ENCODE measurements at regions of chr12 and their contacts with region 1.

Region 1: GRCh38 chr12:113048716-113049127 is 7.8 kb upstream of the DTX1 start:
- DNase-seq: peak; percentile 73 to 89
- ATAC-seq: peak; percentile 70 to 90
- H3K4me3 ChIP-seq: no peak overlapping the region
- H3K27ac ChIP-seq: no peak overlapping the region
- H3K4me1 ChIP-seq: no peaks in the 10 kb centered on the region
- CTCF ChIP-seq: peak; percentile 90
- EP300 ChIP-seq: no peak
- POLR2A ChIP-seq: no peak
- RAD21 ChIP-seq: peak; percentile 87 to 96

Region 2: DNA sequence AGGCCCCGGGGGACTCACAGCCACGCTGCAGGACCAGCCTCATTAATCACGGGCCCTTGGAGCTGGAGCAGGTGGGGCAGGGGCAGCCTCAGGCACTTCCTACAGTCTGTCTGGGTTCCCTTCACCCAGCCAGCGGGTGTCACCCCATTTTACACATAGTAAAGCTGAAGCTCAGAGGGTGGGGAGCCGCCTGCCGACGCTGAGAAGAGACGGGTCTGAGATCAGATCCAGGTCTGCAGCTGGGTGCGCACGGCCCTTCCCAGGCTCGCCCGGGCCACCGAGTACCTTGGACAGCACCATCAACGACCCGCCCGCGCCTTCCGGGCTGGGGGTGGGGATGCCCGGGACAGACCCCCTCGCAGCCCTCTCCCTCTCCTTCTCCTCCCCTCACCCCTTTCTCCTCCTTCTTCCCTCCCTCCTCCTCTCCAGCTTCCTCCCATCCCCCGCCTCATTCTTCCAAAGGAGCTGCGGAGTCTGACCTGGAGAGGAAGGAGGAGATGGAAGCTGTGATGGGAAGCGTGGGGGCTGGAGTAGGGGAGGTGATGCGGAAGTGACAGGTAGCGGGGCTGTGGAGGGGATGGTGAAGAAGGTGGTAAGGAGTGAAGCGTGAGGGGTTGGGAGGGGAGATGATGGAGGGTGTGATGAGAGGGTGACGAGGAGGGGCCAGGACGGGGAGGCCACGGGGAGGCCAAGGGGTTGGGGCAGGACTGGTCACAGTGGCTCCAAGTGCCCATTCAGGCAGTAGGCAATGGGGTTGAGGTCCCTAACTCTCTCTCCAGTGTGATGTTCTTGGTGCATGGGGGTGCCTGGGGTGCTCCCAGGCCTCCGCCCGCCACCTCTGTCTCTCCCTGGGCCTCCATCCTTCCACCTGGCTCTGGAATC is 16.6 kb after region 1 on chr12:
- CTCF ChIA-PET with region 1: interaction called, 30 read pairs
- POLR2A ChIA-PET with region 1: no interaction called
- DNase-seq: no peak
- ATAC-seq: peak; percentile 38 to 64; a peak in 4 of 6 replicates
- H3K4me3 ChIP-seq: no peak overlapping the region
- H3K27ac ChIP-seq: no peak overlapping the region
- H3K4me1 ChIP-seq: no peaks in the 10 kb centered on the region
- CTCF ChIP-seq: no peak
- EP300 ChIP-seq: no peak
- POLR2A ChIP-seq: no peak
- RAD21 ChIP-seq: no peak

Region 3: DNA sequence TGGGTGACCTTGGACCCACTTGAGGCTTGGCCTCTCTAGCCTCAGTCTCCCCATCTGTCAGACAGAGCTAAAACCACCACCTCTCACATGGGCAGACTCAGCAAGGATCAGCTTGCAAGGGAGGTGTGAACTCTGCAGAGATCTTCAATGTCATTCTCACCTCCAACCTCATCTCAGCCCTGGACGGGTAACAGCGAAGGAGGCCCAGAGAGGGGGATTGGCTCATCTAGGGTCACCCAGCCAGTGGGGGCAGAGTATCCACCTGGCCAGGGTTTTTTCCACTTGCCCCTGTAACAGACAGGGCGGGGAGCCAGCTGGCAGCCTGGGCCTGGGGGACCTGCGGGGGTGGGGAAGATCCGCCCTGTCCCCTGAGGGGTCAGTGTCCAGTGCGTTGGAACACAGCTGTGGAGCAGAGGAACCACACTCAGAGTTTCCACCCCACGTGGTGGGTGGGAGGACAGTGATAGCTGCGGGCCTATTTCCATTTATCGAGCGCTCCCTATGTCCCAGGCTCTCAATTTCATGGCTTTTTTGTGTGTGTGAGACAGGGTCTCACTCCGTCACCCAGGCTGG is 35.2 kb after region 1 on chr12:
- CTCF ChIA-PET with region 1: interaction called, 49 read pairs
- POLR2A ChIA-PET with region 1: no interaction called
- DNase-seq: no peak
- ATAC-seq: no peak
- H3K4me3 ChIP-seq: no peak overlapping the region
- H3K27ac ChIP-seq: no peak overlapping the region
- H3K4me1 ChIP-seq: no peaks in the 10 kb centered on the region
- CTCF ChIP-seq: no peak
- EP300 ChIP-seq: no peak
- POLR2A ChIP-seq: no peak
- RAD21 ChIP-seq: no peak

Region 4: GRCh38 chr12:113098446-113098896 is 49.7 kb after region 1 on chr12:
- CTCF ChIA-PET with region 1: interaction called, 61 read pairs
- POLR2A ChIA-PET with region 1: no interaction called
- DNase-seq: peak; percentile 89 to 95
- ATAC-seq: peak; percentile 75 to 86
- H3K4me3 ChIP-seq: no peak overlapping the region
- H3K27ac ChIP-seq: peak overlapping the region; percentile 41 to 44; a peak in 3 of 6 replicates
- H3K4me1 ChIP-seq: peaks cover 5% of the 10 kb centered on the region; the same call in 2 of the 3 replicates
- CTCF ChIP-seq: peak; percentile 76
- EP300 ChIP-seq: no peak
- POLR2A ChIP-seq: no peak
- RAD21 ChIP-seq: peak; percentile 80 to 86

Region 5: GRCh38 chr12:113135178-113136127 is 86.7 kb after region 1 on chr12 and contains the start of gene RASAL1:
- CTCF ChIA-PET with region 1: interaction called, 14 read pairs
- POLR2A ChIA-PET with region 1: no interaction called
- DNase-seq: peak; percentile 86 to 87
- ATAC-seq: peak; percentile 79 to 90
- H3K4me3 ChIP-seq: peak within 1 kb of the TSS; percentile 53
- H3K27ac ChIP-seq: peak within 1 kb of the TSS; percentile 51 to 69; a peak in 4 of 6 replicates
- H3K4me1 ChIP-seq: peaks cover 18% of the 10 kb centered on the region
- CTCF ChIP-seq: peak; percentile 76
- EP300 ChIP-seq: no peak
- POLR2A ChIP-seq: no peak
- RAD21 ChIP-seq: no peak
- polyA plus RNA-seq, gene RASAL1: 0.34 and 0.36 TPM in 2 replicates

Region 6: DNA sequence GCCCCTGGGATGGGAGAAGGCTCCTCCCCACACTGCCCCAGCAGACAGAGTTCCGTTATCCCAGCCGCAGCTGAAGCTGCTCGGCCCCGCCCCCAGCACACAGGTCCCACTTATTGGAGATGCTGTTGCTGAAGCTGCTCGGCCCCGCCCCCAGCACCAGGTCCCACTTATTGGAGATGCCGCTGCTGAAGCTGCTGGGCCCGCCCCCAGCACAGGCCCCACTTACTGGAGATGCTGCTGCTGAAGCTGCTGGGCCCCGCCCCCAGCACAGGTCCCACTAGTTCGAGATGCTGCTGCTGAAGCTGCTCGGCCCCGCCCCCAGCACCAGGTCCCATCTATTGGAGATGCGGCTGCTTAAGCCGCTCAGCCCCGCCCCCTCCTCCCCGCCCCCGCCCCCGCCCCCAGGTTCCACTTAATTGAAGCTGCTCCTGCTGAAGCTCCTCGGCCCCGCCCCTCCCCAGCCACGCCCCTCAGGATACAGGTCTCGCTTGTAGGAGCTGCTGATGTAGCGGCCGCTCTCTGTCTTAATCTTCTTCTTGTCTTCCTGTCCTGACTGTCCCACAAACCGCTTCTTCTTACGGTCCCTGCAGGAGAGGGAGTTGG is 112.8 kb after region 1 on chr12:
- CTCF ChIA-PET with region 1: interaction called, 142 read pairs
- POLR2A ChIA-PET with region 1: no interaction called
- DNase-seq: peak; percentile 48 to 85
- ATAC-seq: peak; percentile 8 to 73; a peak in 3 of 6 replicates
- H3K4me3 ChIP-seq: no peak overlapping the region
- H3K27ac ChIP-seq: no peak overlapping the region
- H3K4me1 ChIP-seq: peaks cover 12% of the 10 kb centered on the region
- CTCF ChIP-seq: no peak
- EP300 ChIP-seq: no peak
- POLR2A ChIP-seq: no peak
- RAD21 ChIP-seq: no peak

Region 7: DNA sequence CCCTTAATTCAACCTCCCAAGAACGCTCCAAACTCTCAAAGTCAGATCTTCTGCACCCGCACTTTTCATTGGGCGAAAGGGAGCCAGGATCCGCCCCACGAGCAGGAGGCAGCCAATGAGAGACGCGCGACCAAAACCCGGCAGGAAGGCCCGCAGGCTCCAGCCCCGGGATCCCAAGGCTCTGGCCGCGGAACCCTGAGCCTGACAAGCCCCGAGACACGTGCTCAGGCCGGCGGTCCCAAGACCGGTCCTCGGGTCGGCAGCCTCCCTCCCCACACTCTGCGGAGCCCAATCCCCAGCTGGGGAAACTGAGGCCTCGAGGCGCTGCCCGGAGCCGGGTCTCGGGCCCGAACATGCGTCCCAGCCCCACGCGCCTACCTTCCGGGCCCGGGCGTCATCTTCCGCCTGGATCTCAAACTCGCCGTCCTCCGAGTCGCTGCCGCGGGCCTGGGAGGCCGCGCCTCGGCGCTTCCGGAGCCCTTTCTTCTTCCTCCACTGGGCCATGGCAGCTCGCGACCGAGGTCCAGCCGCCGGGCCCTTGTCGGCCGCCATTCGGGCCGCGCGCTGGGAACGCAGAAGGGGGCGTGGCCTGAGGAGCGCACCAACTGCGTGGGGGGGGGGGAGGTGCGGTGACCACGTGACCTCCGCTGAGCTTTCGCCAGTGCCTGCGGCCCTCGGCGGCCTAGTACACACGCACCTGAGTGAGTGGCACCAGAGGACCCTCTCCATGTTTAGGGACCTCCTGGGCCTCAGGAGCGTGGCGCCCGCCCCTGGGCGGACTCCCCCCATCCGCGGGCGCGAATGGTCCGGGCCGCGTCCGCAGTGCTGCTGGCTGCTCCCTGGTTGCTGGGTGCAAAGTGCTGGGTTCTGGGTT is 136.4 kb after region 1 on chr12 and contains the starts of genes DDX54 and RITA1:
- CTCF ChIA-PET with region 1: interaction called, 18 read pairs
- POLR2A ChIA-PET with region 1: no interaction called
- DNase-seq: peak; percentile 90 to 93
- ATAC-seq: peak; percentile 94
- H3K4me3 ChIP-seq: peak within 1 kb of the TSS; percentile 89
- H3K27ac ChIP-seq: peak within 1 kb of the TSS; percentile 96 to 98
- H3K4me1 ChIP-seq: peaks cover 20% of the 10 kb centered on the region
- CTCF ChIP-seq: no peak
- EP300 ChIP-seq: no peak
- POLR2A ChIP-seq: peak; percentile 78; the same call in 1 of the 2 replicates
- RAD21 ChIP-seq: no peak
- polyA plus RNA-seq, gene DDX54: 60.6 and 62.4 TPM in 2 replicates
- polyA plus RNA-seq, gene RITA1: 16.7 and 18.6 TPM in 2 replicates